ENCODE measurements at regions of chr20 and their contacts with region 1.

Region 1: DNA sequence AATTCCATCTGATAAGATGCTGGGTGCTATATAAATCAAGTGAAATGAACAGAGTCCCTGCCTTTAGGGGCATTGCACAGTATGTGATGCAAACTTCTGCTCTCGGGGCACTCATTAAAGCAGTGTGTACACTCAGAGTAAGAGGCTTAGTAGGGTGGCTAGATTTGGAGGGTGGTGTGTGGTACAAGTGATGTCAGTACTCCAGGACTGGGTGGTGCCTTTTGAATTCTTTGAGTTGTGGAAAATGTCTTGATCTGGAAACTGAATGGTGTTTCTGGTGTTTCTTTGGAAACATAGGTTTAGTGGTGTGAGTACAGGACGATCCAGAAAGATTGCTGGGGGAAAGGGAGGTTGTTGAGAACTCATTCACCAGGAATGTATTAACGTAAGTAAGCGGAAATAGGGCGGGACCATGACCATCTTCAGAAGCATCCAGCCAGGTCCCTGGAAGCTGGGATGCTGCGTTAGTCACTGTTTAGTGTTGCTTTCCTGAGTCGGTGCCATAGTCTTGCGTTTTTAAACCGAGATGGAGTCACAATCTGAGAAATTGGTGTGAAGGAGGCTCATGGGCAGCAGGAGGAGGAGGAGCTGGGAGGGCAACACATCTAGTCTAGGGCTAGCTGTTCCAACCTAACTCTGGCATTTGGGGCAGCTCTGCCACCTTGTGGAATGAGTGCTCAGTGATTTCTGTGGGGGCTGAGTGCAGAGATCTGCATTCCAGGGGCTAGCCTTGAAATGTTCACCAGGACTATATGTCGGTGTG is 70.3 kb downstream of the SCAND1 start:
- DNase-seq: peak; percentile 99
- H3K4me3 Mint-ChIP-seq: peak overlapping the region; percentile 68
- H3K27ac Mint-ChIP-seq: peak overlapping the region; percentile 100
- H3K4me1 Mint-ChIP-seq: peaks cover 21% of the 10 kb centered on the region
- H3K27me3 Mint-ChIP-seq: no peaks in the 10 kb centered on the region
- CTCF ChIP-seq: peak; percentile 83

Region 2: DNA sequence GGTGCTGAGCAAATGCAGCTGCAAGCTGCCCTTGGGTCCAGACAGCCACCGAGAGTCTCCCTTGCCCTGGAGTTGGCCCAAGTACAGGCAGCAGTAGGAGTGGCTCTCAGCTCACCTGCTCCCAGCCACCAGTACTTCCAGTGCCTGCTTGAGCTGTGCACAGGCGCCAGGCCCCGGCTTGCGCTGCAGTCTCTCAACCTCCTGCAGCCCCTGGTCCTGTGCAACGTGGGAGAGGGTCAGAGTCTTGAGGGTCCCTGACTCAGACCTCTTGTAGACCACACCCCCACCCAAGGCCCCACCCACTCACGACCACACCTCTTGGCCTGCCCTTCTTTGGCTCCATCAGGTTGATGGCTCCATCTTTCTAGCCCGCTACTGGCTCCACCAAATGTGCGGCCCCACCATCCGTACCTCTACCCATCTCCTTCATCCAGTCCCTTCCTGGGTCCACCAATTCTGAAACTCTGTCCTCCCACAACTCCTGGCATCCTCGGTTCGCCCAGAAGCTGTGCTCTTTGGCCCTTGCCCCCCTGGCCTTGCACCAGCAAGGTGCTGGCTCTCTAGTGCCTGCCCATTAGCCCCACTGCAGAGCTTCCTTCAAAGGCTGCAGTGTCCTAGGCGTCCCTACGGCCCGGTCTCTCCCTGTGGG is 284.9 kb before region 1 on chr20:
- CTCF ChIA-PET with region 1: no interaction called
- POLR2A ChIA-PET with region 1: no interaction called
- intact Hi-C with region 1: no loop called
- DNase-seq: no peak
- H3K4me3 Mint-ChIP-seq: no peak overlapping the region
- H3K27ac Mint-ChIP-seq: no peak overlapping the region
- H3K4me1 Mint-ChIP-seq: no peaks in the 10 kb centered on the region
- H3K27me3 Mint-ChIP-seq: peaks cover 19% of the 10 kb centered on the region
- CTCF ChIP-seq: no peak

Region 3: GRCh38 chr20:35664544-35665221 is 219.3 kb before region 1 on chr20 and contains the starts of genes CPNE1 and RBM12:
- CTCF ChIA-PET with region 1: interaction called, 4 read pairs
- POLR2A ChIA-PET with region 1: interaction called, 15 read pairs
- intact Hi-C with region 1: no loop called
- DNase-seq: peak; percentile 90
- H3K4me3 Mint-ChIP-seq: peak within 1 kb of the TSS; percentile 94
- H3K27ac Mint-ChIP-seq: peak within 1 kb of the TSS; percentile 98
- H3K4me1 Mint-ChIP-seq: peaks cover 19% of the 10 kb centered on the region
- H3K27me3 Mint-ChIP-seq: no peaks in the 10 kb centered on the region
- CTCF ChIP-seq: no peak
- total RNA-seq, gene CPNE1: 161 and 194 TPM in 2 replicates
- total RNA-seq, gene RBM12: 60.1 and 64.3 TPM in 2 replicates

Region 4: GRCh38 chr20:35674921-35675320 is 209.0 kb before region 1 on chr20:
- CTCF ChIA-PET with region 1: no interaction called
- POLR2A ChIA-PET with region 1: no interaction called
- intact Hi-C with region 1: no loop called
- DNase-seq: no peak
- H3K4me3 Mint-ChIP-seq: no peak overlapping the region
- H3K27ac Mint-ChIP-seq: no peak overlapping the region
- H3K4me1 Mint-ChIP-seq: no peaks in the 10 kb centered on the region
- H3K27me3 Mint-ChIP-seq: no peaks in the 10 kb centered on the region
- CTCF ChIP-seq: no peak

Region 5: DNA sequence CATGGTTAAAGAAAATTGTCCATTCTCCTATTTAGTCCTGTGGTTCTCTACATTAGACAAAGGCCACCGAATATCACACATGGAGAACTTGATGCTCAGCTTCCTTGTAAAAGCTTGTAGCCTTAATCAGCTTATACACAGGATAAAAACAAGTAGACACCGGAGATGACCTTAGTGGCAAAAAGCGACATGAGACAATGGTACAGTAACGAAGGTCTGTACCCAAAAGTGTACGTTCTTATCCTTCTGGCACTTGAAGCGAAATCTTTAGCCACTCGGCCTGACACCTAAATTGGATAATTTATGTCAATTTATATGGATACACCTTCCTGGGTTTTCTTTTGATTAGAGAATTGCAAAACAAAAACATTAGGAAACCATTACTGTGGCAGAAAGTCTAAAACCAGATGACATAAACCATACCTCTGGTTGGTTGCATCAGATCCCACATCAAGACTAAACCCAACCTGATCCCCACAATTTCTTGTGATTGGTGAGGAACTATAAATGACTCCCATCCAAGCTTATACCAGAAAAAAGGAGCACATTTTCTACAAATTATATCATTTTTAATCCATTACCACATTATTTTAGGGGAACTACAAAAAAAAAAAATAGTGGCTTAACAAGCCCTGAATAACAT is 148.0 kb before region 1 on chr20:
- CTCF ChIA-PET with region 1: interaction called, 7 read pairs
- POLR2A ChIA-PET with region 1: interaction called, 326 read pairs
- intact Hi-C with region 1: no loop called
- DNase-seq: peak; percentile 25
- H3K4me3 Mint-ChIP-seq: peak overlapping the region; percentile 44
- H3K27ac Mint-ChIP-seq: peak overlapping the region; percentile 57
- H3K4me1 Mint-ChIP-seq: peaks cover 29% of the 10 kb centered on the region
- H3K27me3 Mint-ChIP-seq: no peaks in the 10 kb centered on the region
- CTCF ChIP-seq: no peak

Region 6: GRCh38 chr20:35771689-35772562 is 112.0 kb before region 1 on chr20 and contains the start of gene PHF20:
- CTCF ChIA-PET with region 1: interaction called, 5 read pairs
- POLR2A ChIA-PET with region 1: interaction called, 84 read pairs
- intact Hi-C with region 1: loop called (anchors 1 kb)
- DNase-seq: peak; percentile 92
- H3K4me3 Mint-ChIP-seq: peak within 1 kb of the TSS; percentile 91
- H3K27ac Mint-ChIP-seq: peak within 1 kb of the TSS; percentile 97
- H3K4me1 Mint-ChIP-seq: peaks cover 51% of the 10 kb centered on the region
- H3K27me3 Mint-ChIP-seq: no peaks in the 10 kb centered on the region
- CTCF ChIP-seq: no peak
- total RNA-seq, gene PHF20: 64.2 and 74.7 TPM in 2 replicates

Region 7: GRCh38 chr20:35849706-35850105 is 34.3 kb before region 1 on chr20:
- CTCF ChIA-PET with region 1: interaction called, 14 read pairs
- POLR2A ChIA-PET with region 1: interaction called, 26 read pairs
- intact Hi-C with region 1: no loop called
- DNase-seq: no peak
- H3K4me3 Mint-ChIP-seq: no peak overlapping the region
- H3K27ac Mint-ChIP-seq: no peak overlapping the region
- H3K4me1 Mint-ChIP-seq: peaks cover 6% of the 10 kb centered on the region
- H3K27me3 Mint-ChIP-seq: no peaks in the 10 kb centered on the region
- CTCF ChIP-seq: no peak

Region 8: GRCh38 chr20:35854713-35855434 is 29.1 kb before region 1 on chr20:
- CTCF ChIA-PET with region 1: interaction called, 3 read pairs
- POLR2A ChIA-PET with region 1: interaction called, 26 read pairs
- intact Hi-C with region 1: no loop called
- DNase-seq: peak; percentile 47
- H3K4me3 Mint-ChIP-seq: no peak overlapping the region
- H3K27ac Mint-ChIP-seq: peak overlapping the region; percentile 27
- H3K4me1 Mint-ChIP-seq: peaks cover 23% of the 10 kb centered on the region
- H3K27me3 Mint-ChIP-seq: no peaks in the 10 kb centered on the region
- CTCF ChIP-seq: no peak

Region 9: DNA sequence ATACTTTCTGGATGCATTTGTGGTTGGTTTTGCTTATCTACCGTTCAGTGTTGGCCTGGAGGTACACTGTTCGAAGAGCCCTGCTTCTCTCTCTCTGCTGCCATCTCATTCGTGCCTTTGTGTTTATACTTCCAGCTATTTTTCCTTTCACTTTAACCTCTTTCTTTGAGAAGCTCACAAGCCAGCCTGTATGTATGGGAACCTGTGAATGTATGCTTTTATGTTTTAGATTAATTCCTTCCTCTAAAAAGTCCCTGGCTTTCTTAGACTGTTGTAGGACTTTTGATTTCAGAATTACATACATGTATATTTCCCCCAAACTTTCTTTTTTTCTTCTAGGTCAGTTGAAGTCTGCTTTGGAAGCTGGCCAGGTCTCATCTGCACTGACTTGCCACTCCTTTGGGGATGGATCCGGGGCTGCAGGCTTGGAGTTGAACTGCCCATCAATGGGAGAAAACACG is 12.6 kb before region 1 on chr20:
- CTCF ChIA-PET with region 1: interaction called, 27 read pairs
- POLR2A ChIA-PET with region 1: interaction called, 107 read pairs
- intact Hi-C with region 1: loop called (anchors 1 kb)
- DNase-seq: peak; percentile 76
- H3K4me3 Mint-ChIP-seq: peak overlapping the region; percentile 67
- H3K27ac Mint-ChIP-seq: peak overlapping the region; percentile 95
- H3K4me1 Mint-ChIP-seq: peaks cover 40% of the 10 kb centered on the region
- H3K27me3 Mint-ChIP-seq: no peaks in the 10 kb centered on the region
- CTCF ChIP-seq: no peak

Region 10: GRCh38 chr20:35918021-35918420 is 34.1 kb after region 1 on chr20:
- CTCF ChIA-PET with region 1: no interaction called
- POLR2A ChIA-PET with region 1: no interaction called
- intact Hi-C with region 1: no loop called
- DNase-seq: no peak
- H3K4me3 Mint-ChIP-seq: no peak overlapping the region
- H3K27ac Mint-ChIP-seq: peak overlapping the region; percentile 19
- H3K4me1 Mint-ChIP-seq: no peaks in the 10 kb centered on the region
- H3K27me3 Mint-ChIP-seq: no peaks in the 10 kb centered on the region
- CTCF ChIP-seq: no peak

Measured in MCF 10A (cell line).